ENCODE measurements at regions of chr4 and their contacts with region 1.

Region 1: DNA sequence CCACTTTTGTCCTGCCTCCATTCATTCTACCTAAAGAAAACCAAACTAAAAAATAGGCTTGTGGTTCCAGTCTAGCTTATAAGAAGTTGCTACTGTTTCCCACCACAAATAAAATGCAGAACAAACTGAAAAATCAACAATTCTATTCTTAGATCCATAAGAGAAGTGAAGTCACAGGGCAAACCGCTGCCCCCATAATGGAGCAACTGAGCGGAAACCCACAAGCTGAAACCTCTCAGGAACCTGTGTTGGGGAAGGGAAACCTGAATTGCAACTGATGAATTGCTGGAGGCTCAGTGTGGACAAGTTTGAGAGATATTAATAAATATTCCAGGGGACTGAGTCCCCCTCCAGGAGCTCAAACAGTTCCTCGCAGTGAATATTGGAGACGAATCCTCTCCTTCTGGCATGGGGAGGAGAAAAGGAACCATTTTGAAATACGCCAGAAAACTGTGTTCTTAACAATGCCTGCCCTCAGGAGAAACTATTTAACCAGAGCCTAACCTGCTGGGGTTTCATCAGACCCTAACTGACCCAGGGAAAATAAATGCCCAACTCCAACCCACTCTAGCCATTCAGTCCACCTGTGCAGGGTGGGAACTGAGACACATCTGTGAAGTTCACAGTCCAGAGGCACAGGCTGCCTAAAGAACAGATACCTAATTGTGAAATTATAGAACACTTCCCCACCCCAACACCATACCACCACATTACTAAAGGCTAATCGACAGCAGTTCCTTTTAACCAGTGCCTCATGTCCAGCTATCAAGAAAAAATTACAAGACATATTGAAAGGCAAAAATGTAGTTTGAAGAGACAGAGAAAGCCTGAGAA is 22.8 kb upstream of the SH3RF1 start:
- DNase-seq: no peak
- H3K4me3 Mint-ChIP-seq: no peak overlapping the region
- H3K27ac Mint-ChIP-seq: no peak overlapping the region
- H3K4me1 Mint-ChIP-seq: no peaks in the 10 kb centered on the region
- H3K27me3 Mint-ChIP-seq: no peaks in the 10 kb centered on the region
- CTCF ChIP-seq: no peak

Region 2: GRCh38 chr4:167721617-167722486 is 1571.7 kb before region 1 on chr4:
- CTCF ChIA-PET with region 1: no interaction called
- intact Hi-C with region 1: no loop called
- DNase-seq: no peak
- H3K4me3 Mint-ChIP-seq: no peak overlapping the region
- H3K27ac Mint-ChIP-seq: no peak overlapping the region
- H3K4me1 Mint-ChIP-seq: peaks cover 9% of the 10 kb centered on the region
- H3K27me3 Mint-ChIP-seq: no peaks in the 10 kb centered on the region
- CTCF ChIP-seq: no peak

Region 3: DNA sequence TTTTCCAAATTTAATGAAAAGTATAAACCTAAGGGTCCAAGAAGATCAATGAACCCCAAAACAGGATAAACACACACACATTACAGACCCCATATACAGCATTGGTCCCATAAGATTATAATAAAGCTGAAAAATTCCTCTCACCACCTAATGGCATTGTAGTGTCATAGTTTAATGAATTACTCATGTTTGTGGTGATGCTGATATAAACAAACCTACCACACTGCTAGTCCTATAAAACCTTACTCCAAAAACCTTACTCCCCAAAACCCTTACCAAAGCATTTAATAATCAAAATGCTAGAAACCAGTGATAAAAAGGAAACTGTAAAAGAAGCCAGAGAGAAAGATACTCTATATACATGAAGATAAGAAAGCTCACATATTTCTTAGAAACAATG is 125.3 kb after region 1 on chr4:
- CTCF ChIA-PET with region 1: interaction called, 15 read pairs
- intact Hi-C with region 1: no loop called
- DNase-seq: no peak
- H3K4me3 Mint-ChIP-seq: no peak overlapping the region
- H3K27ac Mint-ChIP-seq: no peak overlapping the region
- H3K4me1 Mint-ChIP-seq: no peaks in the 10 kb centered on the region
- H3K27me3 Mint-ChIP-seq: no peaks in the 10 kb centered on the region
- CTCF ChIP-seq: no peak

Measured in Calu3 (cell line).